CD8-positive, alpha-beta memory T cell (primary cell): ENCODE measurements at regions of chr10 and their contacts with region 1.

Region 1: DNA sequence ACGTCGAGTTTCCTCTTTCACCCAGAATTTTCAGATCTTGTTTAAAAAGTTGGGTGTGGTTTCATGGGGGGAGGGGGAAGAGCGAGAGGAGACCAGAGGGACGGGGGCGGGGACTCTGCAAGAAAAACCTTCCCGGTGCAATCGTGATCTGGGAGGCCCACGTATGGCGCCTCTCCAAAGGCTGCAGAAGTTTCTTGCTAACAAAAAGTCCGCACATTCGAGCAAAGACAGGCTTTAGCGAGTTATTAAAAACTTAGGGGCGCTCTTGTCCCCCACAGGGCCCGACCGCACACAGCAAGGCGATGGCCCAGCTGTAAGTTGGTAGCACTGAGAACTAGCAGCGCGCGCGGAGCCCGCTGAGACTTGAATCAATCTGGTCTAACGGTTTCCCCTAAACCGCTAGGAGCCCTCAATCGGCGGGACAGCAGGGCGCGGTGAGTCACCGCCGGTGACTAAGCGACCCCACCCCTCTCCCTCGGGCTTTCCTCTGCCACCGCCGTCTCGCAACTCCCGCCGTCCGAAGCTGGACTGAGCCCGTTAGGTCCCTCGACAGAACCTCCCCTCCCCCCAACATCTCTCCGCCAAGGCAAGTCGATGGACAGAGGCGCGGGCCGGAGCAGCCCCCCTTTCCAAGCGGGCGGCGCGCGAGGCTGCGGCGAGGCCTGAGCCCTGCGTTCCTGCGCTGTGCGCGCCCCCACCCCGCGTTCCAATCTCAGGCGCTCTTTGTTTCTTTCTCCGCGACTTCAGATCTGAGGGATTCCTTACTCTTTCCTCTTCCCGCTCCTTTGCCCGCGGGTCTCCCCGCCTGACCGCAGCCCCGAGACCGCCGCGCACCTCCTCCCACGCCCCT is at the start of gene VIM:
- DNase-seq: peak; percentile 78 to 93 (median 79)
- H3K4me3 ChIP-seq: peak within 1 kb of the TSS; percentile 67
- H3K4me3 Mint-ChIP-seq: peak within 1 kb of the TSS; percentile 90 to 99 (median 96)
- H3K27ac ChIP-seq: peak within 1 kb of the TSS; percentile 98
- H3K27ac Mint-ChIP-seq: peak within 1 kb of the TSS; percentile 95 to 100 (median 99)
- H3K4me1 ChIP-seq: peaks cover 39% of the 10 kb centered on the region
- H3K4me1 Mint-ChIP-seq: peaks cover 48 to 70% (median 57%) of the 10 kb centered on the region in 3 donors
- H3K27me3 ChIP-seq: no peaks in the 10 kb centered on the region
- H3K27me3 Mint-ChIP-seq: peaks cover 0 to 7% of the 10 kb centered on the region in 2 donors
- total RNA-seq, gene VIM: 1,217 to 1,243 TPM

Region 2: GRCh38 chr10:16817125-16818019 is 410.9 kb before region 1 on chr10 and contains the start of gene RSU1:
- CTCF ChIA-PET with region 1: interaction called, 8 read pairs
- POLR2A ChIA-PET with region 1: interaction called, 32 read pairs
- DNase-seq: peak; percentile 100
- H3K4me3 ChIP-seq: peak within 1 kb of the TSS; percentile 90
- H3K4me3 Mint-ChIP-seq: peak within 1 kb of the TSS; percentile 82 to 97 (median 94)
- H3K27ac ChIP-seq: peak within 1 kb of the TSS; percentile 91
- H3K27ac Mint-ChIP-seq: peak within 1 kb of the TSS; percentile 82 to 97 (median 96)
- H3K4me1 ChIP-seq: peaks cover 29% of the 10 kb centered on the region
- H3K4me1 Mint-ChIP-seq: peaks cover 36 to 55% (median 48%) of the 10 kb centered on the region in 3 donors
- H3K27me3 ChIP-seq: no peaks in the 10 kb centered on the region
- H3K27me3 Mint-ChIP-seq: peaks cover 0 to 10% of the 10 kb centered on the region in 2 donors
- total RNA-seq, gene RSU1: 66.4 to 68.5 TPM

Region 3: GRCh38 chr10:17023386-17024298 is 204.7 kb before region 1 on chr10:
- CTCF ChIA-PET with region 1: interaction called, 3 read pairs
- POLR2A ChIA-PET with region 1: interaction called, 10 read pairs
- DNase-seq: peak; percentile 60 to 90 (median 85)
- H3K4me3 ChIP-seq: peak overlapping the region; percentile 18
- H3K4me3 Mint-ChIP-seq: peak overlapping the region; percentile 42 to 68 (median 54)
- H3K27ac ChIP-seq: peak overlapping the region; percentile 89
- H3K27ac Mint-ChIP-seq: peak overlapping the region; percentile 88 to 100 (median 99)
- H3K4me1 ChIP-seq: peaks cover 57% of the 10 kb centered on the region
- H3K4me1 Mint-ChIP-seq: peaks cover 52 to 79% (median 75%) of the 10 kb centered on the region in 3 donors
- H3K27me3 ChIP-seq: no peaks in the 10 kb centered on the region
- H3K27me3 Mint-ChIP-seq: no peaks in the 10 kb centered on the region

Region 4: DNA sequence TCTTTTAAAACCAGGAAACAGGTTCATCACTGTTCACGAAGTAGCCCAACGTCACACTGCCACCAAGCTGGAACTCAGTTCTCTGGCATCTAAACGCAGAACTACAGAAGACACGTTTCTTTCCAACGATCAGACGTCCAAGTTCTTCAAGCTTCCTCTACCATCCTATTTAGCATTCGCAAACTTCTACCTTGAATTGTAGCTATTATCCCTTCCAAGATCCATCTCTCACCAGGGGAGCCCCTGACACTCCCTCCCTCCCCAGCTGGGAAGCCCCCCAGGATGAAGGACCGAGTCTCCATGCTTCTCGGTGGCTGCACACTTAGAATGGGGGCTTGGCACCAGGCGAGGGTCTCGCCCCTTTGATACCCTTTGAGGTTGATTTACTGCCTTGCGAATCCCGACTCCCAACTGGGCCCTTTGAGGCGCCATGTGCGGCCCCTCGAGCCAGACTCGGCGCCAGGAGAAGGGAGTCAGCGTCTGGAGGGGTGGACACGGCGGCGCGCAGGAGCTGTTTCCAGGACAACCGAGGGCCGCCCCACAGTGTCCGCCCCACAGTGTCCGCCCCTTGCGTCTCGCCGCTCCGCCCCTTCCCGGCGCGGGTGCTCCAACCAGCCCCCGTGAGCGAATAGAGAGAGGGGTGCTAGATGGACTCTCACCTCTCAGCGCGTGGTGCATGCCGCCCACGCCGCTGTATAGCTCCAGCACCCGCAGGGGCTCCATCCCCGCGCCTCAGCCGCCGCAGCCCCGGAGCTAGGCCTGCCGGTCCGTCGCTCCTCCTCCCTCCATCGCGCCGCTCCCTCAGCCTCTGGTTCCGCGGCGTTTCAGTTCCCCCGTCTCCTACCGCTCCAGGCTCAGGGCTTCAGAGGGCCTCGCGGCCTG is 27.2 kb before region 1 on chr10 and contains the start of gene TRDMT1:
- CTCF ChIA-PET with region 1: interaction called, 71 read pairs
- POLR2A ChIA-PET with region 1: interaction called, 67 read pairs
- DNase-seq: peak; percentile 70 to 87 (median 80)
- H3K4me3 ChIP-seq: peak within 1 kb of the TSS; percentile 90
- H3K4me3 Mint-ChIP-seq: peak within 1 kb of the TSS; percentile 89 to 99 (median 93)
- H3K27ac ChIP-seq: peak within 1 kb of the TSS; percentile 95
- H3K27ac Mint-ChIP-seq: peak within 1 kb of the TSS; percentile 96 to 100 (median 98)
- H3K4me1 ChIP-seq: peaks cover 21% of the 10 kb centered on the region
- H3K4me1 Mint-ChIP-seq: peaks cover 27 to 52% (median 49%) of the 10 kb centered on the region in 3 donors
- H3K27me3 ChIP-seq: no peaks in the 10 kb centered on the region
- H3K27me3 Mint-ChIP-seq: no peaks in the 10 kb centered on the region
- total RNA-seq, gene TRDMT1: 7.3 to 9.8 TPM

Region 5: DNA sequence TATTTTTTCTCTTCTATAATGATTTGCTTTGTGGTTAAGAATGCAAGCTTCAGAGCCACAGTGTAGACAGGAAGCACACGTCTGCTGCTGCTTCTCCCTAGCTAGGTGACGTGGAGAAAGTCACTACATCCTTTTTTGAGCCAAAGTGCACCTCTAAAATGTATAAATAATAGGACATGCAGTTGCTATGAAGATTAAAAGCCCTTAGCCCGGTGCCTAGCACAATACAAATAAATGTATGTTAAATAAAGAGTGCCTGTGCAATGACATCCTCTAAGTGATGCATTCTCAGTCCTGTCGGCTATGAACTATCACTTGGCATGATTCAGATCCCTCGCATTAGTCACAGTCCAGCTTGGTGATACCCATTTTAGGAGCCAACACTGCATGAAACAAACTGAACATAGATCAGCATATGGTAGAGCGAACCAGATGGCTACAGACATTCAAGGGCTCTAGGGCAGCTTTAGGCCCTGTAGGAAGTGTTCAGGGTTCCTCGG is 22.1 kb before region 1 on chr10:
- CTCF ChIA-PET with region 1: interaction called, 71 read pairs
- POLR2A ChIA-PET with region 1: interaction called, 67 read pairs
- DNase-seq: peak in 4 of 5 donors; percentile 21 to 77 (median 69)
- H3K4me3 ChIP-seq: no peak overlapping the region
- H3K4me3 Mint-ChIP-seq: peak overlapping the region; percentile 3 to 51 (median 11)
- H3K27ac ChIP-seq: peak overlapping the region; percentile 62
- H3K27ac Mint-ChIP-seq: peak overlapping the region; percentile 89 to 98 (median 94)
- H3K4me1 ChIP-seq: peaks cover 26% of the 10 kb centered on the region
- H3K4me1 Mint-ChIP-seq: peaks cover 17 to 44% (median 24%) of the 10 kb centered on the region in 3 donors
- H3K27me3 ChIP-seq: no peaks in the 10 kb centered on the region
- H3K27me3 Mint-ChIP-seq: no peaks in the 10 kb centered on the region

Region 6: DNA sequence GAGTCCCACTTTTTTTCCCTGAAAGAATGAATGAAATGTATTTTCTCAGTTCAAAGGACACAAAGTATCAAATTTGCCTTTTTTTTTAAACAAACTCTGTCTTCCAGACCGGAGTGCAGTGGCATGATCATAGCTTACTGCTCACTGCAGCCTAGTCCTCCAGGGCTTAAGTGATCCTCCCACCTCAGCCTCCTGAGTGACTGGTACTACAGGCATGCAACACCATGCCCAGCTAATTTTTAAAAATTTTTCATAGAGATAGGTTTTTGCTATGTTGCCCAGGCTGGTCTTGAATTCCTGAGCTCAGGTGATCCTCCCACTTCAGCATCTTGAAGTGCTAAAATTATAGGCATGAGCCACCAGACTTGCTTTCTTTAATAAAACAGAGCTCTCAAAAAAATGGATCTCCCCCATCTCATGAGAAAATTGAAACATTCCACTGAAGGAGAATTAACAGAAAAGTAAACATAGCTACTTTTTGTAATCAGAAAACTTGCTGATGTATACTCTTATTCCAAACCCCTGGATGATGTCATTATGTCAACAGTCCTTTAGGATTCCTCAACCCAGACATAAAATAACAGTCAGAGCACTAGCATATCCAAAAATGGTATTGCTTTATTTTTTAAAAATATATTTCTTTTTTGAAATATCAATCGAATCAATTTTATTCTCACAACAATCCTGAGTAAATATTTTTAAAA is 14.5 kb before region 1 on chr10:
- CTCF ChIA-PET with region 1: interaction called, 10 read pairs
- POLR2A ChIA-PET with region 1: interaction called, 44 read pairs
- DNase-seq: no peak
- H3K4me3 ChIP-seq: no peak overlapping the region
- H3K4me3 Mint-ChIP-seq: no peak overlapping the region
- H3K27ac ChIP-seq: no peak overlapping the region
- H3K27ac Mint-ChIP-seq: peak overlapping the region in 1 of 8 donors; percentile 24
- H3K4me1 ChIP-seq: peaks cover 14% of the 10 kb centered on the region
- H3K4me1 Mint-ChIP-seq: peaks cover 12 to 33% (median 20%) of the 10 kb centered on the region in 3 donors
- H3K27me3 ChIP-seq: no peaks in the 10 kb centered on the region
- H3K27me3 Mint-ChIP-seq: no peaks in the 10 kb centered on the region

Region 7: DNA sequence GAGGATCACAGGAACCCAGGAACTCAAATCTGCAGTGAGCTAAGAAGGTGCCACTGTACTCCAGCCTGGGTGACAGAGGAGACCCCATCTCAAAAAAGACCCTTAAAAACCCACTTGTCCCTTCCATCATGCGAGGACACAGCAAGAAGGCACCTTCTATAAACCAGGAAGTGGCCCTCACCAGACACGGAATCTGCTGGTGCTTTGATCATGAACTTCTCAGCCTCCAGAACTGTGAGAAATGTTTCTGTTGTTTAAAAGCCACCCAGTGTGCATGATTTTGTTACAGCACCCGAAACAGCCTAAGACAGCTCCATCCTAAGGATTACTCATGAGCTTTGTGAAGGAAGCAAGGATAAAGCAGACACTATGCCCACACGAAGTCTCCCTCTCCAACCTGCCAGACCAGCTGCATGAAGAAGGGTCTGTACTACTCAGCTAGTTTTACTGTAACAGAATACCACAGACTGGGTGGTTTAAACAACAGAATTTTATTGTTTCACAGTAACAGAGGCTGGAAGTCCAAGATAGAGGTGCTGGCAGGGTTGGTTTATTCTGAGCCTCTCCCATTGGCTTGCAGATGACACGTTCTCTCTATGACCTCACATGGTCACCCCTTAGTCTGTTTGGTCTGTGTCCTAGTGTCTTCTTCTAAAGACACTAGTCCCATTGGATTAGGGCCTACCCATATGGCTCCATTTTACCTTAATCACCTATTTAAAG is 13.5 kb after region 1 on chr10:
- CTCF ChIA-PET with region 1: interaction called, 16 read pairs
- POLR2A ChIA-PET with region 1: interaction called, 5 read pairs
- DNase-seq: peak in 1 of 5 donors; percentile 24
- H3K4me3 ChIP-seq: no peak overlapping the region
- H3K4me3 Mint-ChIP-seq: no peak overlapping the region
- H3K27ac ChIP-seq: no peak overlapping the region
- H3K27ac Mint-ChIP-seq: peak overlapping the region in 2 of 8 donors; percentile 33 to 35
- H3K4me1 ChIP-seq: peaks cover 5% of the 10 kb centered on the region
- H3K4me1 Mint-ChIP-seq: peaks cover 4 to 20% (median 7%) of the 10 kb centered on the region in 3 donors
- H3K27me3 ChIP-seq: no peaks in the 10 kb centered on the region
- H3K27me3 Mint-ChIP-seq: no peaks in the 10 kb centered on the region